AG04450 (cell line): ENCODE measurements at regions of chr12 and their contacts with region 1.

Region 1: GRCh38 chr12:108691175-108691997 is 39.9 kb downstream of the CORO1C start:
- DNase-seq: peak; percentile 99
- H3K4me3 ChIP-seq: peak overlapping the region; percentile 46
- H3K27ac ChIP-seq: peak overlapping the region; percentile 100
- H3K27me3 ChIP-seq: no peaks in the 10 kb centered on the region
- CTCF ChIP-seq: peak; percentile 31

Region 2: GRCh38 chr12:108722992-108723766 is 31.8 kb after region 1 on chr12:
- CTCF ChIA-PET with region 1: interaction called, 4 read pairs
- POLR2A ChIA-PET with region 1: interaction called, 13 read pairs
- DNase-seq: peak; percentile 61
- H3K4me3 ChIP-seq: peak overlapping the region; percentile 8
- H3K27ac ChIP-seq: peak overlapping the region; percentile 92
- H3K27me3 ChIP-seq: no peaks in the 10 kb centered on the region
- CTCF ChIP-seq: no peak

Region 3: GRCh38 chr12:108731105-108731865 is 39.9 kb after region 1 on chr12 and contains the start of gene CORO1C:
- CTCF ChIA-PET with region 1: interaction called, 9 read pairs
- POLR2A ChIA-PET with region 1: interaction called, 26 read pairs
- DNase-seq: peak; percentile 91
- H3K4me3 ChIP-seq: peak within 1 kb of the TSS; percentile 98
- H3K27ac ChIP-seq: peak within 1 kb of the TSS; percentile 96
- H3K27me3 ChIP-seq: no peaks in the 10 kb centered on the region
- CTCF ChIP-seq: peak; percentile 77
- polyA plus RNA-seq, gene CORO1C: 596 and 687 TPM in 2 replicates